ENCODE measurements at regions of chr3 and their contacts with region 1.

Region 1: GRCh38 chr3:113287803-113288648 is 76.7 kb downstream of the BOC start:
- DNase-seq: peak; percentile 54 to 75 (median 66)
- H3K4me3 ChIP-seq: no peak overlapping the region
- H3K27ac ChIP-seq: no peak overlapping the region
- H3K4me1 ChIP-seq: peaks cover 0 to 7% (median 2%) of the 10 kb centered on the region in 4 experiments
- H3K27me3 ChIP-seq: no peaks in the 10 kb centered on the region

Region 2: DNA sequence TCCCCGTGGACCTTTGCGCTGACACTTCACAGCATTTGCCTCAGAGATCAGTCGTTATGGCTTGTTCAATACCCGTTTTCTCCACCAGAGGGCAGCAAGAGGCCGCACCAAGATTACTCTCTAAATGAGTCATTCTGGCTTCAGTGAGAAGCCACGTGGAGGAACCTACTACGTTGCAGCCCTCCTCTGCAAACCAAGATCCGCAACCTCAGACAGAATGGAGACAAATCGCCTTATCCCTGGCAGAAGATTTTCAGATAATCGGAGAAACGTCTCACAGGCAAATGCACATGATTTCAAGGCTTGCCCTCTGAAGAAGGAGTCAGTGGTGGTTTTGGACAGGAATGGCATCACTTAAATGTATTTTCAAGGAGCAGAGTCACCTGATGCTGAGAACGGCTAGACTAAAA is 236.7 kb before region 1 on chr3:
- CTCF ChIA-PET with region 1: interaction called, 45 read pairs
- POLR2A ChIA-PET with region 1: no interaction called
- DNase-seq: peak; percentile 81 to 92 (median 87)
- H3K4me3 ChIP-seq: peak overlapping the region in 1 of 7 experiments; percentile 45
- H3K27ac ChIP-seq: no peak overlapping the region
- H3K4me1 ChIP-seq: peaks cover 0 to 3% (median 0%) of the 10 kb centered on the region in 4 experiments
- H3K27me3 ChIP-seq: no peaks in the 10 kb centered on the region

Region 3: DNA sequence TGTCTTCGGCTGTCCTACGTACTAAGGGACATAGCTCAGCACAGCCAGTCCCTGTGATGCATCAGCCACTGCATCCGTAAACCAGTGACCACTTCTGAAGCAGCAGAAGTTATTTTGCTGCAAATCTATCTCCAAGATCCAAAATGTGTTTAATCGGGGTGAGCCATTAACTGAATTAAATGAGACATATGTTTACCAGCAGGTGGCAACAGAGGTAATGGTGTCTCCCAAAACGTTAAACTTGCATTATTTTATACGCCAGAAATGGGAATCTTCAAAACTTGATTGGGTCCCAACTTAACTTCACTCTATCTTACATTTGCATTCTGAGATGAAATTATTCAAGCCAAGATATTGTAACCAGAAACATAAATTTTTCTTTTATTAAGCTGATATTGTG is 152.0 kb before region 1 on chr3:
- CTCF ChIA-PET with region 1: interaction called, 62 read pairs
- POLR2A ChIA-PET with region 1: no interaction called
- DNase-seq: peak; percentile 26 to 44 (median 43)
- H3K4me3 ChIP-seq: no peak overlapping the region
- H3K27ac ChIP-seq: no peak overlapping the region
- H3K4me1 ChIP-seq: no peaks in the 10 kb centered on the region
- H3K27me3 ChIP-seq: no peaks in the 10 kb centered on the region

Region 4: DNA sequence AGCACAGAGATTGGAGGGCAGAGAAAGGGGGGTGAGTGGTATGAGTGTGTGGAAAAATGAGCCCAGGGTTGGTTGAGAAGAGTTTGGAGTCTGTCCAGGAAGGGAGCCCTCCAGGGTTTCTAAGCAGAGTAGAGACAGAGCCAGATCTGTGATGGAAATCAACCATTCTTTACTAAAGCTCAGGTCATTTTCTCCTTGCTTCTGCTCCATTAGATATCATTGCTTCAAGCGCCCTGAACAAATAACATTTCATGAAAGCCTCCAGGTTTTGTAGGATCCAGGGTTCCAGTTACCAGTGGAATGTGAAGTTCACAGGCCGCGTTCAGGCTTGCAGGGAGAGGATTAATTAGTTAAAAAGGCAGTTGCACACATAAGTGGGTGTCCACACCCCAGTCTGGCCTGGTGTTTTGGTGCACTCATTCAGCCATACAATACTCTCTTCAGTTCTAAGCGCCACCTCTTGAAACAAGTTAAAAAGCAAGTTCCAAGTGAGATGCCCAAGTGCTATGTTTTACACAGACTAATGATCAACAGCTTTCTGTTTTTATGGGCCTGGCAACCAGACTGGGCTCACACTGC is 93.1 kb before region 1 on chr3:
- CTCF ChIA-PET with region 1: no interaction called
- POLR2A ChIA-PET with region 1: no interaction called
- DNase-seq: no peak
- H3K4me3 ChIP-seq: no peak overlapping the region
- H3K27ac ChIP-seq: no peak overlapping the region
- H3K4me1 ChIP-seq: no peaks in the 10 kb centered on the region
- H3K27me3 ChIP-seq: no peaks in the 10 kb centered on the region

Region 5: GRCh38 chr3:113274425-113275257 is 13.4 kb before region 1 on chr3:
- CTCF ChIA-PET with region 1: interaction called, 13 read pairs
- POLR2A ChIA-PET with region 1: no interaction called
- DNase-seq: no peak
- H3K4me3 ChIP-seq: no peak overlapping the region
- H3K27ac ChIP-seq: no peak overlapping the region
- H3K4me1 ChIP-seq: peaks cover 0 to 15% (median 13%) of the 10 kb centered on the region in 4 experiments
- H3K27me3 ChIP-seq: no peaks in the 10 kb centered on the region

Measured in common myeloid progenitor, CD34-positive (primary cell).